A549 (cell line): ENCODE measurements at regions of chr1 and their contacts with region 1.

Region 1: DNA sequence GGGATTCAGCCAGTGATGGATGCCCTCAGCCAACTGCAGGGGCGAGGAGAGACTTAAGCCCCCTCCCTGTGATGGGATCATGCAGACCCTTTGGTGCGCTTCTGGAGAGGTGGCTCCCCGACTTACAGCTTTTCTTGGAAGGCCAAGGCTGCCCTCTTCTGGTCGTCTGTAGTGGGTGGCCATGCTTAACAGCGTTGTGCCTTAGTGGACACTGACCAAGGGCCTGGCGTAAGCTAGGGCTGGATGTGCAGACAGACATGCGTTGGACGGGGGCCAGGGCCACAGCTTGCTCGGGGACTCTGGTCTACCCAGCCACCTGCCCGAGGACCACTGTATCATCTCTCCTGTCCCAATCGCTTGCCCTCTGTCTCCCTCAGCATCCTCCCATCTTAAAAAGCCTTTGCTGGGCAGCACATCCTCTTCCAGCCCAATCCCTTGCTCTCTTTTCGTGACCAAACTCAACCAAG is 5.5 kb downstream of the AZIN2 start:
- DNase-seq: peak; percentile 33 to 83
- ATAC-seq: peak; percentile 86 to 95
- H3K4me3 ChIP-seq: no peak overlapping the region
- H3K27ac ChIP-seq: no peak overlapping the region
- H3K4me1 ChIP-seq: 0 out of 3 replicates have a peak, but pooled peaks cover 5% of the 10 kb centered on the region
- CTCF ChIP-seq: peak; percentile 72
- EP300 ChIP-seq: no peak
- POLR2A ChIP-seq: no peak
- RAD21 ChIP-seq: peak; percentile 83 to 86

Region 2: DNA sequence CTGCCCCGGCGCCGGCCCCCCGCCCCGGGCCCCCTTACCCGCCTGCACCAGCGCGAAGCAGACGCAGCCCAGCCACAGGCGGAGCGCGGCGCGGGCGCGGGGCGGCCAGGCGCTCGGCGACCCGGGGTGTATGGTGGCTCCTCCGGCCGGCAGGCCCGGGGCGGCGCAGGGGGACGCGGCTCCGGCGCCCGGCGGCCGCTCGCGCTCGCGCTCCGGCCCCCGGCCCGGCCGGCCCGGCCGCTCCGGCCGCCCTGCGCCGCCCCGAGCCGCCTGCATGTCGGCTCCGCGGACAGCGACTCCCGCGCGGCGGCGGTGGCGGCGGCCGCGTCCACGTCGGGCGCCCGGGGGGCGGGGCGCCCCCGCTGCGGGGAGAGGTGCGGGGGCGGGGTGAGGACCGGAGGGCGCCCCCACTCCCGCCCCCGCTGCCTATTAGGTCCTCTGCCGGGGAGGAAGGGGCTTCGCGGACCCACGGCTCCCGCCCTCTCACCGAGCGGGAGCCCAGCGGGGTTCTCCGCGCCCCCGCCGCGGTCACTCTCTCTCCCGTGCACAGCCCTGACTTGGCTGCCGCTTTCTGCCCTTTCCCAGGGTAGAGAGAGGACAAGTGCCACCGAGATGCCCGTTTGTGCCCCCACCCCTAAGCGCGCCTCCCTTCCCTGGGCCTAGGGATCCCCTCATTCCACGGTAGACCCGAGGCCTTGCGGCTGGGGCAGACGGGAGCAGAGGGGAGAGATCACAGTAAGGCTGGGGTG is 215.6 kb before region 1 on chr1 and contains the start of gene FNDC5:
- CTCF ChIA-PET with region 1: interaction called, 40 read pairs
- POLR2A ChIA-PET with region 1: no interaction called
- DNase-seq: no peak
- ATAC-seq: peak; percentile 39 to 66
- H3K4me3 ChIP-seq: peak within 1 kb of the TSS; percentile 58
- H3K27ac ChIP-seq: peak within 1 kb of the TSS; percentile 52 to 84; a peak in 4 of 6 replicates
- H3K4me1 ChIP-seq: 0 out of 3 replicates have a peak, but pooled peaks cover 2% of the 10 kb centered on the region
- CTCF ChIP-seq: no peak
- EP300 ChIP-seq: no peak
- POLR2A ChIP-seq: no peak
- RAD21 ChIP-seq: no peak
- polyA plus RNA-seq, gene FNDC5: 0.26 and 0.78 TPM in 2 replicates

Region 3: DNA sequence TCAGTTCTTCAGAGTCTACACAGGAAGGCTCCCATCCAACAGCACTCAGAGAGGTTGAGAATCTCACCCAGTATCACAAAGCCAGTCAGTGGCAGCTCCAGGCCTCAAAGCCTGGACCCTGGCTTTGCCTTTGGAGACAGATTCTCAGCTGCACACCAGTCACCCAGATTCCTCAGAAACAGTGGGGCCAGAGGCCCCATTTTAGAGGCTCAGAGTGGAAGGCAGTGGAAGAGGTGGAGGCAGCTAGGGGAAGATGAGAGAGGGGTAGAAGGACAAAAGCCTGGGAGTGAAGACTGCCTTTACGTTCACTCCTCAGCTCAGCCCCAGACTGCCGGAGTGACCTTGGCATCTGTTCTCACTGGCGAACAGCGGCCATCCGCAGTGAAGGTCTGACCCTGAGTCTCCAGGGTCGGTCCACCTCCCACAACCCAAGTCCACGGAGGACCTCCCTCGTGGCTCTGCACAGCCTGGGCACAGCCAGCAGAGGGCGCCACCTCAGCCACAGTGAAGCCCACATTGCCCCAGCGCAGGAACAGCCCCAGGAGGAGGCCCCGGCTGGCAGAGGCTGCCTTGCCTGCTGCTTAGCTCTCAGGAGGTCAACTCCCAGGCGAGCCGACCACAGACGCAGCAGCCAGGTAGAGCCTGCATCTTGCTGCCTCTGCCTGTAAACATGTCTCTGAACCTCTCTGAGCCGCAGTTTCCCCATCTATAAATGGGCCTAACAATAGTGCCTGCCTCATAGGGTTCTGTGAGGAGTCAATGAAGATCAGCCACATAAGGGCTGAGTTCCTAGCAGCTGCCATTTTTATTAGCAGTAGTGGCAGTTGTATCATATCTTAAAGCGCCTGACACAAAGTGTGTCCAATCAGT is 209.8 kb before region 1 on chr1:
- CTCF ChIA-PET with region 1: interaction called, 40 read pairs
- POLR2A ChIA-PET with region 1: no interaction called
- DNase-seq: peak; percentile 34 to 54
- ATAC-seq: peak; percentile 64 to 85
- H3K4me3 ChIP-seq: no peak overlapping the region
- H3K27ac ChIP-seq: no peak overlapping the region
- H3K4me1 ChIP-seq: no peaks in the 10 kb centered on the region
- CTCF ChIP-seq: peak; percentile 52
- EP300 ChIP-seq: no peak
- POLR2A ChIP-seq: no peak
- RAD21 ChIP-seq: peak; percentile 43 to 55; a peak in 4 of 5 replicates

Region 4: DNA sequence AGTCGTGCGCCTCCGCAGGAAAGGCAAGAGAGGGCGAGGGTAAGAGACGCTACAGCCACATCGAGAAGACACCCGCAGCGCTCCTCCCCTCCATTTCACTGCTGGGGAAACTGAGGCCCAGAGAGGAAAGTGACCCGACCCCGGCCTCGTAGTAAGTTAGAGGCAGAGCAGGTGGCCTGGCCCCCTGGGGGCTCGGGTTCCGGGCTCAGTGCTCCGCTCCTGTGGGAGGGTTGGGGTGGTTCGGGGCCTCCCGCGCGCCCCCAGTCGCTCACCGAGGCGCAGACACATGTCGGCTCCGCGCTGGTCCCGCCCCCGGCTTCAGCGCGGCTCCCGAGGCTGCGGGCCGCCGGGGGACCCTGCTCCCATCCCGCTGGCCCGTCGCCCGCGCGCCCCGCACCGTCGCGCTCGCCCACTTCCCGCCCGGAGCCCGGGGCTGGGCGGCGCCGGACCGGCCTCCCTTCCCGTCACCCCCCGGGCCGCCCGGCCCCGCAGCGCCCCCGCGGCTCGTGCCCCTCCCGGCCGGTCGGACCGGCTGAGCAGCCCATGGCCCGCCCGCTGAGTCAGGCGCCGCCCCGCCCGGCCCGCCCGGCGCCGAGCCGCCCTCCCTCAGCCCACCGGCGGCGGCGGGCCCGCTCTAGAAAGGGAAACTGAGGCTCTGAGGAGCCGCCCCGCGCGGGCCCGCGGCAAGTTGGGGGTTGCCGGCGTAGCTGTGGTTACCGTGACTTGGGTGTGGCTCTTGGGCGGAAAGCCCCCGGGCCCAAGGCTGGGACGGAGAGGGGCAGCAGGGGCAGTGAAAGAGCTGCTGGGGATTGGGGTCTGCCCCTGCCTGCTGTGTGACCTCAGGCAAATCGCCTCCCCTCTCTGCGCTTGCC is 185.2 kb before region 1 on chr1 and contains the start of gene TMEM54:
- CTCF ChIA-PET with region 1: interaction called, 10 read pairs
- POLR2A ChIA-PET with region 1: no interaction called
- DNase-seq: no peak
- ATAC-seq: peak; percentile 70 to 72
- H3K4me3 ChIP-seq: peak within 1 kb of the TSS; percentile 79
- H3K27ac ChIP-seq: peak within 1 kb of the TSS; percentile 80 to 97
- H3K4me1 ChIP-seq: peaks cover 14% of the 10 kb centered on the region; the same call in 2 of the 3 replicates
- CTCF ChIP-seq: no peak
- EP300 ChIP-seq: no peak
- POLR2A ChIP-seq: peak; percentile 50
- RAD21 ChIP-seq: no peak
- polyA plus RNA-seq, gene TMEM54: 22.1 and 32.6 TPM in 2 replicates

Region 5: DNA sequence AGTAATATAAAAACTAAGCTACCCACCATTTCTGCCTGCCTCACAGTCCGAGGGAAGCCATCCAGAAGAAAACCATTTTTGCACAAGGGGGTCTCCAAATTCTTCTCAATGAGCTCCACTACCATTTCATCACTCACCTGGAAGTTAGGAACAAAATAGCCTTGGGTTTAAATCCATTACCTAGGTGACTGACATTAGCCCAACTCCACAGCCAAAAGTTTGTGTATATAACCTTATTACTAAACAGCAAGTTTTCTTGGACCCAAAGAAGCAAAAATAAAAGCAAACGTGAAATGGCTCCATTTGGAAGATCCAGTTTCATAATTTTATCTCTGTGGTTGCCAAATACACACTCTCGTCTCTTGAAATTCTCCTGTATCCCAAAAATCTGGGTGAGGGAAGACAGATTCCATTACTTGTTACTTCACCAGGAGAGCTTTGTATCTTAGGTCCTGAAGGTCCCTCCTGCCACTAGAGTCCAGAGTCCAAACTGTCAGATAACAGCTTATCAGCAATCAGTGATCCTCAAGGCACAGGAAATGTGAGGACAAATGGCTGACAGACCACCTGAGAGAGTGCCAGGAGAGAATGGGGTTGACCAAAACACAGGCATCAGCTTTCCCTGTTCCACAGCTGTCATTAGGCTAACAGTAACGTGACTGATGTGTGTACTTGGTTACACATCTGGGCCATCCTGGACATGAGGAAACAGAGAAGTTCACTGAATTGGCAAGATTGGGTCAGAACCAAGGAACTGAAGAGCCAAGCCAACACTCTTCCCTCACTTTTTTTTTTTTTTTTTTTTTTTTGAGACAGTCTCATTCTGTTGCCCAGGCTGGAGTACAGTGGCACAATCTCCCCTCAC is 64.6 kb before region 1 on chr1:
- CTCF ChIA-PET with region 1: no interaction called
- POLR2A ChIA-PET with region 1: no interaction called
- DNase-seq: no peak
- ATAC-seq: no peak
- H3K4me3 ChIP-seq: no peak overlapping the region
- H3K27ac ChIP-seq: no peak overlapping the region
- H3K4me1 ChIP-seq: no peaks in the 10 kb centered on the region
- CTCF ChIP-seq: no peak
- EP300 ChIP-seq: no peak
- POLR2A ChIP-seq: no peak
- RAD21 ChIP-seq: no peak

Region 6: GRCh38 chr1:33206340-33206739 is 119.9 kb after region 1 on chr1:
- CTCF ChIA-PET with region 1: no interaction called
- POLR2A ChIA-PET with region 1: no interaction called
- DNase-seq: no peak
- ATAC-seq: no peak
- H3K4me3 ChIP-seq: no peak overlapping the region
- H3K27ac ChIP-seq: no peak overlapping the region
- H3K4me1 ChIP-seq: no peaks in the 10 kb centered on the region
- CTCF ChIP-seq: no peak
- EP300 ChIP-seq: no peak
- POLR2A ChIP-seq: no peak
- RAD21 ChIP-seq: no peak